H1 (cell line): ENCODE measurements at regions of chr13 and their contacts with region 1.

Region 1: DNA sequence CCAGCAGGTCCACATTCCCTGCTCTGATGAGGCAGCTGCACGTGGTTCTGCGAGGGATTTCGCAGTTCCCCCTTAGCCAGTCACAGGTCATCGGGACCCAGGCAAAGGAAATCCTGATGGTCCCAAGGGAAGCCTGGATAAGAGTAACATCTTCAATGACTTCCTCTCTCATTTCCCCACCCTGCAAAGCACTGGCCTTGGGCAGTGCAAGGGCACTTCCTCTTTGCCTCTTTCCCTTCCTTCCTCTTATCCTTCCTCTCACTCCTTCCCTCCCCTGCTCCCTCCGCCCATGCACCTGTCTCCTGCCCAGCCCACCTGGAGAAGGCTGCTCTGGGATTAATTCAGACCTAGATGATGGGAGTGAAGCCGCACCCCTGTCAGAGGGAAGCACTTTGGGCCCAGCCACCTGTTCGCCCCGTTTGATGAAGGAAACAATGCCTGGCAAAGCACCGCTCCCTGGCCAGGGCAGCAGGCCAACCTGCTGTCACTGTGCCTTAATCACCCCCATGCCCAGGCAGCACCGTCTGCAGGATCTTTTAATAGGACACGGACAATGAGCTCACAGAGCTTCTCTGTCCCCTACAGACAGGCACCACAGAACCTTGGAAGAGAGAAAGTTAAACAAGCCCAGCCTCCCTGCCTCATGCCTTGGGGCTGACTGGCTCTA is 113.5 kb upstream of the PABPC3 start:
- DNase-seq: no peak
- H3K4me3 ChIP-seq: no peak overlapping the region
- H3K27ac ChIP-seq: no peak overlapping the region
- H3K4me1 ChIP-seq: peaks cover 0 to 6% (median 0%) of the 10 kb centered on the region in 4 experiments; a peak in 3 of 7 replicates
- H3K27me3 ChIP-seq: no peaks in the 10 kb centered on the region
- CTCF ChIP-seq: no peak
- EP300 ChIP-seq: no peak
- POLR2A ChIP-seq: no peak
- RAD21 ChIP-seq: no peak

Region 2: GRCh38 chr13:24741016-24741662 is 241.3 kb before region 1 on chr13:
- CTCF ChIA-PET with region 1: interaction called, 12 read pairs
- POLR2A ChIA-PET with region 1: no interaction called
- DNase-seq: no peak
- H3K4me3 ChIP-seq: no peak overlapping the region
- H3K27ac ChIP-seq: no peak overlapping the region
- H3K4me1 ChIP-seq: peaks cover 0 to 4% (median 1%) of the 10 kb centered on the region in 4 experiments; a peak in 1 of 7 replicates
- H3K27me3 ChIP-seq: peaks cover 19 to 29% (median 28%) of the 10 kb centered on the region in 4 experiments
- CTCF ChIP-seq: peak in 2 of 3 experiments; percentile 31 to 57; a peak in 3 of 4 replicates
- EP300 ChIP-seq: no peak
- POLR2A ChIP-seq: no peak
- RAD21 ChIP-seq: peak; percentile 23 to 50; a peak in 3 of 4 replicates

Region 3: DNA sequence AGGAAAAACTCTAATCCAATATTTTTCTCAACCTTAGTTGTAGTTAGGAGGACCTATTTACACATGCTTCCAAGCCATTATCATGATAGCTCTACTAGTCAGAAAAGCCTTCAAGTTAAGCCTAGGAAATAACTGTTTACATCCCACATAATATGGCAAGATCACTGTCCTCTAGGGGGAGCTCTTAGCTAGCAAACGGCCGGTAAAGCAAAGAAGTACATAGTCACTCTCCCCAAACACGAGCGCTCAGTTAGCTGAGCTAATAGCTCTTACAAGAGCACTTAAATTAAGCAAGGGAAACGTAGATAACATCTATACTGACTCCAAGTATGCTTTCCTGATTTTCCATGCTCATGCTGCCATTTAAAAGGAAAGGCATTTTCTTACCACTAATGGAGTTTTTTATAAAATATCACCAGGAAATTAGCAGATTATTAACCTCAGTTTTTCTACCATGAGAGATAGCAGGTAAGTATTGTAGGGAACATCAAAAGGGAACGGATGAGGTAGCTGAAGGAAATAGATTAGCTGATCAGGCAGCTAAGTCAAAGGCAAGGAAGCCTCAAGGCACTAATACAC is 12.8 kb after region 1 on chr13:
- CTCF ChIA-PET with region 1: interaction called, 26 read pairs
- POLR2A ChIA-PET with region 1: no interaction called
- DNase-seq: peak in 1 of 2 experiments; percentile 55
- H3K4me3 ChIP-seq: no peak overlapping the region
- H3K27ac ChIP-seq: no peak overlapping the region
- H3K4me1 ChIP-seq: no peaks in the 10 kb centered on the region; a peak in 1 of 7 replicates
- H3K27me3 ChIP-seq: no peaks in the 10 kb centered on the region
- CTCF ChIP-seq: peak in 2 of 3 experiments; percentile 79 to 81; a peak in 3 of 4 replicates
- EP300 ChIP-seq: no peak
- POLR2A ChIP-seq: no peak
- RAD21 ChIP-seq: peak; percentile 78 to 85